HEK293 (cell line): ENCODE measurements at regions of chr6 and their contacts with region 1.

Region 1: DNA sequence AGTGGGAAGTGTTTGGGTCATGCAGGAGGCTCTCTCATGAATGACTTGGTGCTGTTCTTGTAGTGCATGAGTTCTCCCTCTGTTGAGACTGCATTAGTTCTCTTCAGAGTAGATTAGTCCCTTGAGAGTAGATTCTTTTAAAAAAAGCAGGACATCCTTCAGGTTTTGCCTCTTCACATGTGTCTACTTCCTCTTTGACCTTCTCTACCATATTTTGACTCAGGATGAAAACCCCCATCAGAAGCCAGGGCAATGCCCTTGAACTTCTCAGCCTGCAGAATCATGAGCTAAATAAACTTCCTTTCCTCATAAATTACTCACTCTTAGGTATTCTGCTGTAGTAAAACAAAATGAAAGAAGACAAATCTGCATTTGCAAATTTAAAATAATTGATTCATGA is 170.3 kb downstream of the CD109 start:
- H3K4me3 ChIP-seq: no peak overlapping the region
- H3K27ac ChIP-seq: no peak overlapping the region
- H3K4me1 ChIP-seq: no peaks in the 10 kb centered on the region
- CTCF ChIP-seq: no peak

Region 2: GRCh38 chr6:73854998-73855718 is 11.1 kb before region 1 on chr6:
- CTCF ChIA-PET with region 1: interaction called, 13 read pairs
- POLR2A ChIA-PET with region 1: no interaction called
- H3K4me3 ChIP-seq: no peak overlapping the region
- H3K27ac ChIP-seq: no peak overlapping the region
- H3K4me1 ChIP-seq: no peaks in the 10 kb centered on the region
- CTCF ChIP-seq: no peak